GM12878 (cell line): ENCODE measurements at regions of chr1 and their contacts with region 1.

Region 1: DNA sequence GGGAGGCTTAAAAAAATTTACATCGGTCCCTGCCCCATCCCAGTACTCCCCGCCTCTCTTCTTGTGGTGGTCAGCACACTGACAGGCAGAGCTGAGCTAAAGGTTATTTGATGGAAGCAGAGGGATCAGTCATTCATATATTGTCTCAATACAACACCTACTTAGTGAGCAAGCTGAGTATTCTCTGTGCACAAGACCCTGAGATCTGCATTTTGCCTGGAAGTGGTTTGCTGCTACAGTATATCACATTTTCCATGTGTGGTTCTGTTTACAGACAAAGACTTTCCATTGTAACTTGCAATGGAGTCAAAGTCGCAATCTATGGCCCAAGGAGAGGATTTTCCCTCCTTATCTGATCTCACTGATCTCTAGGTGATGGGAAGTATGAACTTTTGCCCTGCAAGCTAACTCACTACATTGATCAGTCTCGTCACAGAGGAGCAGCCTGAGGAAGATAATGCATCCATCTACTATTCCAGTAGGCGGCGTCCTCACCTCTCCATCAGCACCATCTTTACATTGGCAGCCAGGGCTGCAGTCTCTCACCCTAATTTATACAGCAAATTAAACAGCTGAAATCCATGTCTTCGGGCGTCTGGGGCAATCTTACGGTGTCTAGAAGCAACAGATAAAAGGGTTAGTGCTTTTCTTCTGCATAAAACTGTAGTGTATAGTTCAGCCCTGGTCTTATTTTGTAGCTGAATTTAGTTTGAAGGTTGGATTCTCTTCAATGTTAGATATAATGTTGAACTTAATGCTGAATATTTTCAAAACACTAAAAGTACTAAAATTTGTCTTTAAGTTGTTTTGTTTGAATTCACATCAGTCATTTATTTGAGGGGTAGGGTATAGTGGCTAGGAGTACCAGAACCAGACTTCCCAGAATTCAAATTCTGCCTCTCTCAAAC is 3.2 kb upstream of the TRAF5 start:
- DNase-seq: no peak
- ATAC-seq: peak; percentile 73
- H3K4me3 ChIP-seq: no peak overlapping the region
- H3K27ac ChIP-seq: no peak overlapping the region
- H3K4me1 ChIP-seq: peaks cover 12% of the 10 kb centered on the region
- H3K27me3 ChIP-seq: no peaks in the 10 kb centered on the region
- CTCF ChIP-seq: peak; percentile 89 to 97 (median 93)
- EP300 ChIP-seq: no peak
- POLR2A ChIP-seq: no peak
- RAD21 ChIP-seq: peak; percentile 91

Region 2: GRCh38 chr1:211309617-211310016 is 13.8 kb before region 1 on chr1:
- CTCF ChIA-PET with region 1: interaction called, 15 read pairs
- POLR2A ChIA-PET with region 1: interaction called, 6 read pairs
- RAD21 ChIA-PET with region 1: interaction called, 4 read pairs
- SMC1A ChIA-PET with region 1: interaction called, 3 read pairs
- in situ Hi-C with region 1: no loop called
- intact Hi-C with region 1: no loop called
- DNase-seq: no peak
- ATAC-seq: no peak
- H3K4me3 ChIP-seq: no peak overlapping the region
- H3K27ac ChIP-seq: no peak overlapping the region
- H3K4me1 ChIP-seq: 0 out of 2 replicates have a peak, but pooled peaks cover 2% of the 10 kb centered on the region
- H3K27me3 ChIP-seq: no peaks in the 10 kb centered on the region
- CTCF ChIP-seq: no peak
- EP300 ChIP-seq: no peak
- POLR2A ChIP-seq: no peak
- RAD21 ChIP-seq: no peak

Region 3: GRCh38 chr1:211345719-211346118 is 22.3 kb after region 1 on chr1:
- CTCF ChIA-PET with region 1: interaction called, 30 read pairs
- POLR2A ChIA-PET with region 1: interaction called, 6 read pairs
- RAD21 ChIA-PET with region 1: interaction called, 13 read pairs
- SMC1A ChIA-PET with region 1: interaction called, 29 read pairs
- in situ Hi-C with region 1: no loop called
- intact Hi-C with region 1: no loop called
- DNase-seq: no peak
- ATAC-seq: no peak
- H3K4me3 ChIP-seq: no peak overlapping the region
- H3K27ac ChIP-seq: no peak overlapping the region
- H3K4me1 ChIP-seq: no peaks in the 10 kb centered on the region
- H3K27me3 ChIP-seq: no peaks in the 10 kb centered on the region
- CTCF ChIP-seq: no peak
- EP300 ChIP-seq: no peak
- POLR2A ChIP-seq: no peak
- RAD21 ChIP-seq: no peak

Region 4: DNA sequence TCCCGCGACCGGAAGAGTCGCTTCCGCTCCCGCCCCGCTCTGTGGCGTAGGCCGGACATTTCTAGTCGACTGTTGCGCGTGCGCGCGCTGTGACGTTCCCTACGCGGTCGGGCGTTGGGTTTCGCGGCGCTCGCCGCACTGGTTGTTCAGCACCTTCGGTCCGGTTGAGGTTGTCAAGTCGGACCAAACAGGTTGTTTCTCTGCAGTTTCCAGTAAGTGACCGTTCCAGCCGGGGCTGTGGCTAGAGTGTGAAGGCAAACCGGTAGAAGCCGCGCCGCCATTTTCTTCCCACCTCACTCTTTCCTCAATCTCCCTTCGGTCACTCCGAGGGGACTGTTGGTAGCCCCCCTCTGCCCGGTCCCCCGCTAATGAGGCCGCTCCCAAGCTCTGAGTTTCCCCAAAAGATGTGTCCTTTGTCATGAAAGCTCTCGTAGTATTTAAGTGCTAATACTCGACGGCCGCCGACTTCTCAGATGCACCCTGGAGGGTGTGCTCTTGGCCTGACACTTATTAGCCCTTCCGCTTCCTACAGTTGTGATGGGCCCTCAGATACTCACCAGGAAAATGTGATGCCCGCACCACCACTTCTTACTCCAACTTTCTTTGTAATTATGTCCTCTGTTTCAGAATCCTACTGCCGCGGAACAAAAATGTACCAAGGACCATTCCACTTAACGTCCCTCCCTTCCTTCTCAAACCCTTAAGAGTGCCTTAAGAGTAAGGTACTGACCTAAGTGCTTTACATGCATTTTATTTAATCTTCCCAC is 59.5 kb after region 1 on chr1:
- CTCF ChIA-PET with region 1: interaction called, 13 read pairs
- POLR2A ChIA-PET with region 1: interaction called, 9 read pairs
- RAD21 ChIA-PET with region 1: interaction called, 5 read pairs
- SMC1A ChIA-PET with region 1: interaction called, 12 read pairs
- in situ Hi-C with region 1: no loop called
- intact Hi-C with region 1: loop called (anchors 2 kb)
- DNase-seq: peak; percentile 80
- ATAC-seq: peak; percentile 98
- H3K4me3 ChIP-seq: peak overlapping the region; percentile 76
- H3K27ac ChIP-seq: peak overlapping the region; percentile 95
- H3K4me1 ChIP-seq: peaks cover 4% of the 10 kb centered on the region; the same call in 1 of the 2 replicates
- H3K27me3 ChIP-seq: no peaks in the 10 kb centered on the region
- CTCF ChIP-seq: no peak
- EP300 ChIP-seq: no peak; a peak in 1 of 4 replicates
- POLR2A ChIP-seq: peak; percentile 98
- RAD21 ChIP-seq: no peak

Region 5: DNA sequence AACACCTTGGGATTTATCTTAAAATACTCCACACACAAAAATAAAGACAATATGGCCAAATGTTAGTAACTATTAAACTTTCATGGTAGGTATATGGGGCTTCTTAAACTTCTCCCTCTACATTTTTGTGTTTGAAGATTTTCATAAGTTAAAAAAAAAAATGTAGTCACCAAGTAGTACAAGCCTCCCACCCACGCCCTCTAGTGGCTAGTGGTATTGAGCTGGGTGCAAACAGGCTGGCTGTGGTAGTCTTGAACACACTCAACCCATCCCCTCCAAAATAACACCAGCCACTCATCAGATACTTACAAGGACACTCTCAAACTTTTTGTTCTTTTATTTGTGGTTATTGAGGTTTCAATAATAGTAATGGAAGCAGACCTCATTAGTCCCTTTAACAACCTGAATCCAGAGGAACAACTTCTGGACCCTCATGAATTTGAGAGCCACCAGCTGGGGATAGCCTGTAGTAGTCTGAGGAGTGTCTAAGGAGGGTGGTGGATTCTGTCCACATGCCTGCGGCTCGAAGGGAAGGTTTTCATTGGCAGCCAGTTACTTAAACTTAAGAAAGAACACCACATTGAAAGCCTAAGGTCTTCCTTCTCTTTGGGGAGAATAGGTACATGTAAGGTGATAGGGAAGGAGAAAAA is 152.9 kb after region 1 on chr1:
- CTCF ChIA-PET with region 1: interaction called, 61 read pairs
- POLR2A ChIA-PET with region 1: interaction called, 4 read pairs
- RAD21 ChIA-PET with region 1: interaction called, 12 read pairs
- SMC1A ChIA-PET with region 1: interaction called, 22 read pairs
- in situ Hi-C with region 1: loop called (anchors 5 kb)
- intact Hi-C with region 1: loop called (anchors 1 kb)
- DNase-seq: peak; percentile 20
- ATAC-seq: peak; percentile 96
- H3K4me3 ChIP-seq: no peak overlapping the region
- H3K27ac ChIP-seq: no peak overlapping the region
- H3K4me1 ChIP-seq: no peaks in the 10 kb centered on the region
- H3K27me3 ChIP-seq: peaks cover 1 to 7% of the 10 kb centered on the region in 2 experiments; a peak in 2 of 4 replicates
- CTCF ChIP-seq: peak; percentile 84 to 91 (median 90)
- EP300 ChIP-seq: no peak
- POLR2A ChIP-seq: no peak
- RAD21 ChIP-seq: peak; percentile 75

Region 6: GRCh38 chr1:211654838-211655787 is 331.7 kb after region 1 on chr1:
- CTCF ChIA-PET with region 1: interaction called, 11 read pairs
- POLR2A ChIA-PET with region 1: no interaction called
- RAD21 ChIA-PET with region 1: interaction called, 3 read pairs
- SMC1A ChIA-PET with region 1: interaction called, 11 read pairs
- in situ Hi-C with region 1: loop called (anchors 5 kb)
- intact Hi-C with region 1: loop called (anchors 2 kb)
- DNase-seq: no peak
- ATAC-seq: peak; percentile 99
- H3K4me3 ChIP-seq: no peak overlapping the region
- H3K27ac ChIP-seq: no peak overlapping the region
- H3K4me1 ChIP-seq: no peaks in the 10 kb centered on the region
- H3K27me3 ChIP-seq: peaks cover 0 to 2% of the 10 kb centered on the region in 2 experiments; a peak in 1 of 4 replicates
- CTCF ChIP-seq: peak; percentile 90 to 97 (median 94); a peak in 5 of 6 replicates
- EP300 ChIP-seq: no peak
- POLR2A ChIP-seq: no peak
- RAD21 ChIP-seq: peak; percentile 98